ENCODE measurements at regions of chr9 and their contacts with region 1.

Region 1: DNA sequence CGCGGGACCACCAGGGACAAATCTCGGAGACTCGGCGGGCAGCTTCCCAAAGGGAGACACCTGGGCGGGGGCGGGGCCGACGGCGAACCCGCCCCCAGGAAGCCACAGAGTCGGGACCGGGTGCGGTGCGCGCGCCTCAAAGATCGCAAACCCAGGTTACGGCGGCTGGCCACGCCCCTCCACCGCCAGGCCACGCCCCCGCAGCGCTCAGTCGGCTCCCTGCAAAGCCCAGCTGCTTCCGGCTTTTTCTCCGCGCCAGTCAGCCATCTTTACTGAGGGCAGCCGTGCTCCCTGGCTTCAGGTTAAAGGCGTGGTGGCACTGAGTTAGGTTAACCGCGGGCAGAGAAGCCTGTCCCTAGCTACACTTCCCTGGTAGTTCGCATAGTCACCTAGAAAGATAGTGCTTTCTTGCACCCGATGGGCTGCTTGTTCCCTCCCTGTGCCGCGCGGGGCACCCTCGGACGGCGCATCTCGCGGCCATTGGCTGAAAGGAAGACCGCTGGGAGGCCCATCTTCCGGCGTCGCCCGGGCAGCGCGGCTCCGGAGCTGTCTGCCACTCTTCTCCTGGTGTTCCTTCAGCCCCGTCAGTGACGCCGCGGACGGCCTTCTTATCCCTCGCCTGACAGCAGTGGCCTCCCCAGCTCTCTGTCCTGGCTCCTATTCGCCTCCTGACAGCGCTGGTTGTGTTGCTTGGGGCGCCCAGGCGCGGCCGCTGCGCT is at the start of gene TBC1D2:
- DNase-seq: peak; percentile 98
- ATAC-seq: peak; percentile 89
- H3K4me3 ChIP-seq: peak within 1 kb of the TSS; percentile 89 to 98 (median 93)
- H3K4me3 Mint-ChIP-seq: peak within 1 kb of the TSS; percentile 98
- H3K27ac ChIP-seq: peak within 1 kb of the TSS; percentile 83 to 92
- H3K27ac Mint-ChIP-seq: peak within 1 kb of the TSS; percentile 100
- H3K4me1 ChIP-seq: peaks cover 11 to 21% of the 10 kb centered on the region in 2 donors
- H3K4me1 Mint-ChIP-seq: peaks cover 15% of the 10 kb centered on the region
- H3K27me3 ChIP-seq: no peaks in the 10 kb centered on the region
- H3K27me3 Mint-ChIP-seq: no peaks in the 10 kb centered on the region
- CTCF ChIP-seq: peak; percentile 14
- total RNA-seq, gene TBC1D2: 4.3 and 5.0 TPM in 2 replicates

Region 2: GRCh38 chr9:97696803-97697601 is 558.7 kb before region 1 on chr9 and contains the start of gene XPA:
- CTCF ChIA-PET with region 1: no interaction called
- POLR2A ChIA-PET with region 1: interaction called, 4 read pairs
- intact Hi-C with region 1: loop called (anchors 2 kb)
- DNase-seq: peak; percentile 97
- ATAC-seq: peak; percentile 92
- H3K4me3 ChIP-seq: peak within 1 kb of the TSS; percentile 67 to 84 (median 74)
- H3K4me3 Mint-ChIP-seq: peak within 1 kb of the TSS; percentile 91
- H3K27ac ChIP-seq: peak within 1 kb of the TSS; percentile 77 to 82
- H3K27ac Mint-ChIP-seq: peak within 1 kb of the TSS; percentile 94
- H3K4me1 ChIP-seq: peaks cover 30 to 40% of the 10 kb centered on the region in 2 donors
- H3K4me1 Mint-ChIP-seq: peaks cover 59% of the 10 kb centered on the region
- H3K27me3 ChIP-seq: no peaks in the 10 kb centered on the region
- H3K27me3 Mint-ChIP-seq: peaks cover 7% of the 10 kb centered on the region
- CTCF ChIP-seq: no peak
- total RNA-seq, gene XPA: 21.3 and 27.4 TPM in 2 replicates

Region 3: GRCh38 chr9:98045234-98046179 is 210.2 kb before region 1 on chr9:
- CTCF ChIA-PET with region 1: interaction called, 3 read pairs
- POLR2A ChIA-PET with region 1: interaction called, 9 read pairs
- intact Hi-C with region 1: loop called (anchors 1 kb)
- DNase-seq: peak; percentile 83
- ATAC-seq: peak; percentile 77
- H3K4me3 ChIP-seq: peak overlapping the region; percentile 15 to 74 (median 48)
- H3K4me3 Mint-ChIP-seq: peak overlapping the region; percentile 63
- H3K27ac ChIP-seq: peak overlapping the region; percentile 56 to 80
- H3K27ac Mint-ChIP-seq: peak overlapping the region; percentile 84
- H3K4me1 ChIP-seq: peaks cover 33 to 35% of the 10 kb centered on the region in 2 donors
- H3K4me1 Mint-ChIP-seq: peaks cover 39% of the 10 kb centered on the region
- H3K27me3 ChIP-seq: no peaks in the 10 kb centered on the region
- H3K27me3 Mint-ChIP-seq: no peaks in the 10 kb centered on the region
- CTCF ChIP-seq: peak; percentile 13

Region 4: GRCh38 chr9:98087420-98088354 is 168.1 kb before region 1 on chr9:
- CTCF ChIA-PET with region 1: interaction called, 7 read pairs
- POLR2A ChIA-PET with region 1: no interaction called
- intact Hi-C with region 1: loop called (anchors 1 kb)
- DNase-seq: peak; percentile 87
- ATAC-seq: peak; percentile 89
- H3K4me3 ChIP-seq: peak overlapping the region in 2 of 5 experiments; percentile 15 to 25
- H3K4me3 Mint-ChIP-seq: peak overlapping the region; percentile 80
- H3K27ac ChIP-seq: peak overlapping the region in 1 of 2 donors; percentile 8
- H3K27ac Mint-ChIP-seq: peak overlapping the region; percentile 69
- H3K4me1 ChIP-seq: peaks cover 0 to 8% of the 10 kb centered on the region in 2 donors
- H3K4me1 Mint-ChIP-seq: peaks cover 20% of the 10 kb centered on the region
- H3K27me3 ChIP-seq: no peaks in the 10 kb centered on the region
- H3K27me3 Mint-ChIP-seq: no peaks in the 10 kb centered on the region
- CTCF ChIP-seq: no peak

Region 5: GRCh38 chr9:98192503-98193335 is 63.0 kb before region 1 on chr9 and contains the start of gene CORO2A:
- CTCF ChIA-PET with region 1: no interaction called
- POLR2A ChIA-PET with region 1: interaction called, 4 read pairs
- intact Hi-C with region 1: loop called (anchors 1 kb)
- DNase-seq: peak; percentile 73
- ATAC-seq: peak; percentile 91
- H3K4me3 ChIP-seq: peak within 1 kb of the TSS; percentile 34 to 77 (median 67)
- H3K4me3 Mint-ChIP-seq: peak within 1 kb of the TSS; percentile 91
- H3K27ac ChIP-seq: no peak within 1 kb of the TSS
- H3K27ac Mint-ChIP-seq: peak within 1 kb of the TSS; percentile 71
- H3K4me1 ChIP-seq: peaks cover 8 to 18% of the 10 kb centered on the region in 2 donors
- H3K4me1 Mint-ChIP-seq: peaks cover 10% of the 10 kb centered on the region
- H3K27me3 ChIP-seq: peaks cover 0 to 12% (median 2%) of the 10 kb centered on the region in 4 experiments
- H3K27me3 Mint-ChIP-seq: no peaks in the 10 kb centered on the region
- CTCF ChIP-seq: peak; percentile 23
- total RNA-seq, gene CORO2A: 2.0 TPM in 2 replicates

Region 6: DNA sequence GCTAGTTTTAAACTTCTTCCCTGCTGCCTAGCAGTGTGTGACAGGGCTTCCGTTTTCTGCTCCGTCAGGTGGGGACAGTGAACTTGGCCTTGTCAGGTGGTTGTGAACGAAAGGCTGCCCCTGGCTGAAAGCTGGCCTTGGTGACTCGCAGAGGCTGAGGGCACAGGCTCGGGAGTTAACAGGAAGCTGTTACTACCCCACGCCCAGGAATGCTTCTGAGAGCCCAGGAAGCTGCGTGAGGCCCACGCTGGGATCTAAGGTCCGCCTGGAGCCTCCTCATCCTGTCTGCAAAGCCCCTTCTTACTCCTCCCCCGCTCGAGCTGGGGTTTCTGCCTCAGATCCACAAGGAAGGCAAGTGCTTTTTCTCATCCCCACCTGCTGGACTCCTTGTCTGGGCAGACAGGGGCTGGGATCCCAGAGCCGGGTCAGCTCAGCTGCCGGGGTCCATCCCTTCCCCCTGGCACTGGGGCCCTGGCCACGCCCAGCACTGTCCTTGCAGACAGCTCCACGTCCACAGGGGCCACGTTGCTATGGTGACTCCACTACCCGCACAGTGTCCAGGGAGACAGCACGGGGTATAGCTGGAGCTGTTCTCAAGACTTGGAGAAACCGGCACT is 124.4 kb after region 1 on chr9:
- CTCF ChIA-PET with region 1: no interaction called
- POLR2A ChIA-PET with region 1: no interaction called
- intact Hi-C with region 1: no loop called
- DNase-seq: peak; percentile 65
- ATAC-seq: peak; percentile 51
- H3K4me3 ChIP-seq: peak overlapping the region in 1 of 5 experiments; percentile 8
- H3K4me3 Mint-ChIP-seq: peak overlapping the region; percentile 56
- H3K27ac ChIP-seq: peak overlapping the region; percentile 73 to 77
- H3K27ac Mint-ChIP-seq: peak overlapping the region; percentile 88
- H3K4me1 ChIP-seq: peaks cover 41 to 69% of the 10 kb centered on the region in 2 donors
- H3K4me1 Mint-ChIP-seq: peaks cover 51% of the 10 kb centered on the region
- H3K27me3 ChIP-seq: no peaks in the 10 kb centered on the region
- H3K27me3 Mint-ChIP-seq: no peaks in the 10 kb centered on the region
- CTCF ChIP-seq: no peak

Region 7: DNA sequence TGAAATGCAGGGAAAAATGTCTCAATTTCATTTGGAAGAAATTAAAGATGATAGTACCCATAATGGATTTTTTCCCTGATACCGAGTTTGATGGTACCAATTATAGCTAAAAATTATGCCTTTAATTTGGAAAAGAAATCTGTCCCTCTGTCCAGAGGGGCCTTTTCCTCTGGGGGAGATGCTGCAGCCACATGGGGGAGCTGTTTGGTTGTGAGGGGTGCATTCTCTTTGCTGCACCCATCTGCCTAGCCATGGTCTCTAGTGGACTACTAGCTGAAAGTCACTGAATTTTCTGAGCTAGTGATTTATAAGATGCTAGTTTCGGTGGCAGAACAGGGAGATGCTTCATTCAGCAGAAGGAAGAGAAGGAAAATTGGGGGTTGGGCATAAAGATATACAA is 976.0 kb after region 1 on chr9:
- CTCF ChIA-PET with region 1: no interaction called
- POLR2A ChIA-PET with region 1: interaction called, 10 read pairs
- intact Hi-C with region 1: no loop called
- DNase-seq: peak; percentile 52
- ATAC-seq: no peak
- H3K4me3 ChIP-seq: no peak overlapping the region
- H3K4me3 Mint-ChIP-seq: no peak overlapping the region
- H3K27ac ChIP-seq: no peak overlapping the region
- H3K27ac Mint-ChIP-seq: no peak overlapping the region
- H3K4me1 ChIP-seq: peaks cover 21 to 23% of the 10 kb centered on the region in 2 donors
- H3K4me1 Mint-ChIP-seq: peaks cover 29% of the 10 kb centered on the region
- H3K27me3 ChIP-seq: no peaks in the 10 kb centered on the region
- H3K27me3 Mint-ChIP-seq: no peaks in the 10 kb centered on the region
- CTCF ChIP-seq: peak; percentile 75